Gastrocnemius medialis (tissue), 4 donors: ENCODE measurements at regions of chr2 and their contacts with region 1.

Region 1: DNA sequence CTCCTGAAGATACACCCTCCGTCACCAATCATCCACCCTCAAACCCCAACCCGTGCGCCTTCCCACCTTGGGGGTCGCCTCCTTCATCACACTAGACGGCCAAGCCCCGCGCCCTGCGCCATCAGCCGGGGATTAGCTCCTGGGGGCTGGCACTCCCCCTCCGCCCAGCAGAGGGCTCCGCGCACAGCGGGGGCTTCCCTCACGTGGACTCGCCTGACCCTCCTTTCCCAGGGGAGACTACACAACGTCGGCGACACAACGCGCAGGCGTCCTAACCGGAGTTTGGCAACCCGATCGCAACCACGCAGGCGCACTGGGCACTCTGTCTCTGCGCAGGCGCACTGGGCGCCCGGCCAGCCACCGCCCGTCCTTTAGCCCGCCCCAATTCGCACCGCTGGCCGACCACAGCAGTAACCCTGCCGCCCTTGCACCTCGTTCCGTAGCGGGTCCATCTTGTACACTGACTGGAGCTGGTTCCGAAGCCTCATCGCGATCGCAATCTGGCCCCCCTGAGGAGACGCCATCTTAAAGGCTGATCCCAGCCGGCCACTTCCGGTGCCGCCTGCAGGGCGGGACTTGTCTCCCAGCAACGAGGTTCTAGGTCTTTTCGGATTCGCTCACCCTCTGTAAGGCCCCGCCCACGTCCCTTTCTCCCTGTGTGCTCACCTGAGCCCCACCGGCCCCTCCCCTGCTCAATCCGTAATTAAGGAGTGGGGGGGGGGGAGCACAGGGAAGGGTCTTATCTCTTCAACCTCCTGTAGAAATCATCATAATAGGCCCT is at the start of gene PCGF1:
- DNase-seq: peak; percentile 98 to 99
- ATAC-seq: peak; percentile 98 to 99
- H3K4me3 ChIP-seq: peak within 1 kb of the TSS; percentile 75 to 99 (median 84)
- H3K27ac ChIP-seq: peak within 1 kb of the TSS; percentile 92 to 100 (median 98)
- H3K4me1 ChIP-seq: peaks cover 25 to 41% of the 10 kb centered on the region in 2 donors
- H3K27me3 ChIP-seq: peaks cover 26 to 53% (median 38%) of the 10 kb centered on the region in 3 donors
- CTCF ChIP-seq: peak in 4 of 5 experiments; percentile 18 to 29 (median 24)
- POLR2A ChIP-seq: no peak
- total RNA-seq, gene PCGF1: 14.2 to 23.6 (median 20.0) TPM

Region 2: DNA sequence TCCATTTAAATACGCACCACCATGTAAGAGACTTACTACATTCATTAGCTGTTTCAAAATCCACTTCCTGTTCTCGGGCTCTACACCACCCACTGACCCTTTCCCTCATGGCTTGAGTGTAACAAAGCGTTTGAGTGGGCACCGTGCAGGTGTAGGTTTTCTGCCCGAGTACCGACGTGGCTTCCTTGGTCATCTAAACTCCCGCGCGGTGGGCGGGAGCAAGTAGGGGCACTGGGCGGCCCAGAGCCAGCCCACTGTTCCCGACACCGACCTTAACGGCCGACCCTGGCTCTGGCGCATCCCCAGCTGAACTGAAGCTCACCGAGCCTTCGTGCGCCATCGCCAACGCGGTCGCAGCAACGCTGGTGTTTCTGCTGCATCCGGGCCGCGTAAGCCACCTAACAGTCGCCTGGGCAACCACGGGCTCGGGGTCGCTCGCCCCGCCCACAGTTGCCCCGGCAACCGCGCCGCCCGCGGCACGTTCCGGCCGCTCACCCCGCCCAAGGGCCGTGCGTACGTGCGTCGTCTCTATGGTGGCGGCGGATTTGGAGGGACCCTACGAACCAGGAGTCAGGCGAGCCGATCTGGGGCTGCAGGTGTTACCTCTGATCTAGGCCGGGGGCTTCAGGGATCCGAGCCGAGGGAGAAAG is 86.0 kb before region 1 on chr2 and contains the starts of genes C2orf81 and WDR54:
- in situ Hi-C with region 1: no loop called
- intact Hi-C with region 1: no loop called
- DNase-seq: peak; percentile 40 to 49
- ATAC-seq: peak; percentile 72 to 73
- H3K4me3 ChIP-seq: peak within 1 kb of the TSS; percentile 57 to 64 (median 58)
- H3K27ac ChIP-seq: peak within 1 kb of the TSS in 1 of 4 donors; percentile 38
- H3K4me1 ChIP-seq: peaks cover 5 to 9% of the 10 kb centered on the region in 2 donors
- H3K27me3 ChIP-seq: peaks cover 17 to 33% (median 24%) of the 10 kb centered on the region in 3 donors
- CTCF ChIP-seq: no peak
- POLR2A ChIP-seq: no peak
- total RNA-seq, gene C2orf81: 0.24 TPM in 1 of 4 donors, not detected in the others
- total RNA-seq, gene WDR54: 0.51 to 2.1 (median 1.4) TPM

Region 3: DNA sequence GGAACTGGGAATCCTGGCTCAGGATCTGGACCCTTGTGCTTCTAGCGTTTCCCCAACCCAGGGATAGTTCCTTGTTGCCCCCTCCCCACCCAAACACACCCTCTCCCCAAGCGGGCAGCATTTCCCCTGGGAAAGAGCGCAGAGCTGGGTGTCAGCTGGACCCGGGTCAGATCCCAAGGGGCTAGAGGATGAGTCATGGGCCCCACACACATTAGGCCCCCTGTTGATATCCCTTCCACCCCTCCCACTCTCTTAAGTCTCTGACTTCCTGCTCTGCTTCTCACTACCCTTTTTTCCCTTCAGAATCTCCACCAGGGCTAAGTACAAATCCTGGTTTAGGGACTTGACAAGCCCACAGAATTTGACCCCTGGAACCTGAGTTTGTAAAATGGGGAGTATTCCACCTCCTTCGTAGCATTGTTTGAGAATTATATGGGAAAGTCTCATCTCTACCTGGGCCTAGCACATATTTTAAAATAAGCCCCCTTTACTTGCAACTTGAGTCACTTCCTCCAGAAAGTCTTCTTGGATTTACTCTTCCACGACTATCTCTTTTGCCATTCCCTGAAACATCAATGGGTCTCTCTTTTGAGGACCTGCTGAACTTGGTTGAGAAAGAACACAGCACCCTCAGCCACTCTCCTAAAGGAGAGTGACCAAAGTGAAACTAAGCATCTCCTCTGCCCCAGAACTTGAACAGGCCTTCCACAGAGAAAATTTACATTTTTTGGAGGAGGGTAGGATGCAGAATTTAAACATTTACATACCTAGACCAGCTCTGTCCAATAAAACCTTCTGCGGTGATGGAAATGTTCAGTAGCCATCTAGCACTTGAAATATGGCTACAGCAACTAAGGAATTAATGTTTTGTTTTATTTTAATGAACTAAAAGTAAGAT is 70.3 kb before region 1 on chr2:
- in situ Hi-C with region 1: no loop called
- intact Hi-C with region 1: no loop called
- DNase-seq: no peak
- ATAC-seq: no peak
- H3K4me3 ChIP-seq: no peak overlapping the region
- H3K27ac ChIP-seq: no peak overlapping the region
- H3K4me1 ChIP-seq: peaks cover 20 to 28% of the 10 kb centered on the region in 2 donors
- H3K27me3 ChIP-seq: peaks cover 1 to 19% (median 2%) of the 10 kb centered on the region in 3 donors
- CTCF ChIP-seq: no peak
- POLR2A ChIP-seq: no peak

Region 4: GRCh38 chr2:74529357-74530238 is 22.3 kb after region 1 on chr2 and contains the starts of genes AUP1 and HTRA2:
- in situ Hi-C with region 1: no loop called
- intact Hi-C with region 1: loop called (anchors 1 kb)
- DNase-seq: peak; percentile 98
- ATAC-seq: peak; percentile 91 to 94
- H3K4me3 ChIP-seq: peak within 1 kb of the TSS; percentile 80 to 100 (median 93)
- H3K27ac ChIP-seq: peak within 1 kb of the TSS; percentile 84 to 94 (median 89)
- H3K4me1 ChIP-seq: peaks cover 19 to 28% of the 10 kb centered on the region in 2 donors
- H3K27me3 ChIP-seq: no peaks in the 10 kb centered on the region
- CTCF ChIP-seq: no peak
- POLR2A ChIP-seq: peak; percentile 70 to 89
- total RNA-seq, gene AUP1: 112 to 148 (median 115) TPM
- total RNA-seq, gene HTRA2: 24.2 to 38.5 (median 29.4) TPM

Region 5: GRCh38 chr2:74548900-74549826 is 41.8 kb after region 1 on chr2:
- in situ Hi-C with region 1: no loop called
- intact Hi-C with region 1: loop called (anchors 1 kb)
- DNase-seq: no peak
- ATAC-seq: peak; percentile 45 to 70
- H3K4me3 ChIP-seq: peak overlapping the region; percentile 55 to 70 (median 63)
- H3K27ac ChIP-seq: peak overlapping the region; percentile 32 to 65 (median 53)
- H3K4me1 ChIP-seq: peaks cover 4 to 13% of the 10 kb centered on the region in 2 donors
- H3K27me3 ChIP-seq: peaks cover 17 to 30% (median 26%) of the 10 kb centered on the region in 3 donors
- CTCF ChIP-seq: no peak
- POLR2A ChIP-seq: no peak